SK-N-SH (cell line): ENCODE measurements at regions of chr10 and their contacts with region 1.

Region 1: GRCh38 chr10:21495752-21496342 is 29.6 kb downstream of the SKIDA1 start:
- DNase-seq: peak; percentile 99
- H3K4me3 ChIP-seq: peak overlapping the region; percentile 92
- H3K27ac ChIP-seq: peak overlapping the region; percentile 62 to 91
- H3K4me1 ChIP-seq: peaks cover 0 to 7% of the 10 kb centered on the region in 2 experiments; a peak in 2 of 4 replicates
- H3K27me3 ChIP-seq: no peaks in the 10 kb centered on the region
- CTCF ChIP-seq: peak; percentile 90
- EP300 ChIP-seq: peak; percentile 54 to 58; a peak in 3 of 4 replicates
- RAD21 ChIP-seq: peak; percentile 90

Region 2: DNA sequence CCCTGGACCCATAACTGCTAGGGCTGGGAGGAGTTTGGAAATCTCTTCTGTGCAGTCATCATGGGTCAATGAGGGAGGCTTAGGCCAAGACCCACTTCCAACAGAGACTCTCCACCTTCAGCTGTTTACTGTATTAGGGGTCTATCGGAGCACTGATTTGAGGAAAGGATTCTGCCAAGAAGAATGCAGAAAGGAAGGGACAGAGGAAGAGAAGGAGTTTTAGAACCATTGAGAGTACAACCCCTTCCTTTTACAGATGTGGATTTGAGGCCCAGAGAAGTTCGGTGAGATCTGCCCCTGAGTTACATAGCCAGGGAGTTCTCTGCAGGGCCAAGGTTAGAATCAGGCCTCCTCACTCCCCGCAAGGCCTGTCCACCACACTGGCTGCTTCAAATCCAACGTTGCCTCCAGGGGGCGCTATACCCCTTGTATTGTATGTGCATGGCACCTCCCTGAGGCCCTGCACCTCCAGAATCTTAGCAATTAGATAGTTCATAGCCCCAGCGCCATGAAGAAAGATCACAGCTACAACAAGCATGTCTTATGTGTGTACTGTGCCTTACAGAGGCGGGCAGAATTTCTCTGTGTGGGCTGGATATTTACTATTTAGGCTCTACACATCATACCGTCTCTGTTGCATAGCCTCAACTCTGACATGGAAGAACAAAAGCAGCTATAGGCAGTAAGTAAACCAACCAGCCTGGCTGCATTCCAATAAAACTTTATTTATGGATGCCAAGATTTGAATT is 217.2 kb before region 1 on chr10:
- CTCF ChIA-PET with region 1: interaction called, 18 read pairs
- POLR2A ChIA-PET with region 1: no interaction called
- DNase-seq: peak; percentile 63
- H3K4me3 ChIP-seq: no peak overlapping the region; a peak in 1 of 4 replicates
- H3K27ac ChIP-seq: no peak overlapping the region
- H3K4me1 ChIP-seq: peaks cover 0 to 5% of the 10 kb centered on the region in 2 experiments; a peak in 1 of 4 replicates
- H3K27me3 ChIP-seq: no peaks in the 10 kb centered on the region
- CTCF ChIP-seq: peak; percentile 90
- EP300 ChIP-seq: no peak
- RAD21 ChIP-seq: peak; percentile 91

Region 3: GRCh38 chr10:21479570-21480315 is 16.1 kb before region 1 on chr10:
- CTCF ChIA-PET with region 1: no interaction called
- POLR2A ChIA-PET with region 1: no interaction called
- DNase-seq: no peak
- H3K4me3 ChIP-seq: no peak overlapping the region
- H3K27ac ChIP-seq: no peak overlapping the region
- H3K4me1 ChIP-seq: no peaks in the 10 kb centered on the region
- H3K27me3 ChIP-seq: no peaks in the 10 kb centered on the region
- CTCF ChIP-seq: no peak
- EP300 ChIP-seq: no peak
- RAD21 ChIP-seq: no peak

Region 4: GRCh38 chr10:21525367-21526183 is 29.7 kb after region 1 on chr10 and contains the start of gene SKIDA1:
- CTCF ChIA-PET with region 1: interaction called, 101 read pairs
- POLR2A ChIA-PET with region 1: interaction called, 26 read pairs
- DNase-seq: peak; percentile 86
- H3K4me3 ChIP-seq: peak within 1 kb of the TSS; percentile 70 to 76
- H3K27ac ChIP-seq: peak within 1 kb of the TSS; percentile 98 to 99
- H3K4me1 ChIP-seq: peaks cover 28 to 38% of the 10 kb centered on the region in 2 experiments; a peak in 3 of 4 replicates
- H3K27me3 ChIP-seq: no peaks in the 10 kb centered on the region
- CTCF ChIP-seq: no peak
- EP300 ChIP-seq: peak in 1 of 2 experiments; percentile 30; a peak in 1 of 4 replicates
- RAD21 ChIP-seq: no peak
- polyA plus RNA-seq, gene SKIDA1: 0.38 and 0.47 TPM in 2 replicates

Region 5: DNA sequence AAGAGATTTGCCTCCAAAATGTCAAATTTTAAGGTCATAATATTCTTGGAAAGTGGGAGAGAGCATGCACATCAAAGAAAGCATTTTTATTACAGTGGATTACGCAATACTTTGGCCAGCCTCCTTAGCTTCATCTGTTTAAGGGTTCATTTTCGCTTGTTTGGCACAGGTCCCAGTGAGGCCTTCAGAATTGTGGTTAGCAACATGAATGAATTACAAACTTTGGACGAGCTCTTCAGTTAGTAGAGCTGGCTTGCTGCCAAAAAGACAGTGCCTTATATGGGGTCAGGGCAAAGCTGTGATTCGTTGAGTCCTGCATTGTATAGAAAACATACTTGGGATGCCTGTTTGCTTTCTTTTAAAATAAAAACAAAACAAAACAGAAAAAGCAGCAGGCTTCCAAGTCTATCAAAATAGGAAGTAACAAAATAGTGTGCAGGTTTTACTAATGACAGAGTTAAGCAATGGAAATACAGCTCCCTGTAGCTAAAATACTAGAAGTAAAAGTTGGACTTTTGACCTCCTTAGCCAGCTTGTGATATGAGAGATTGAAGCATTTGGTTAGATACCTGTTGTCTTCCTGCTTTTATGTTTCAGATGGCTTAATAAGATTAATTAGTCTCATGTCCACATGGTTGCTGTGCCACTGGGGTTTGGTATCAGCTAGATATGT is 229.0 kb after region 1 on chr10:
- CTCF ChIA-PET with region 1: interaction called, 73 read pairs
- POLR2A ChIA-PET with region 1: interaction called, 3 read pairs
- DNase-seq: peak; percentile 61
- H3K4me3 ChIP-seq: no peak overlapping the region
- H3K27ac ChIP-seq: peak overlapping the region; percentile 62 to 87
- H3K4me1 ChIP-seq: peaks cover 39 to 44% of the 10 kb centered on the region in 2 experiments
- H3K27me3 ChIP-seq: no peaks in the 10 kb centered on the region
- CTCF ChIP-seq: no peak
- EP300 ChIP-seq: peak; percentile 31 to 68; a peak in 2 of 4 replicates
- RAD21 ChIP-seq: no peak

Region 6: DNA sequence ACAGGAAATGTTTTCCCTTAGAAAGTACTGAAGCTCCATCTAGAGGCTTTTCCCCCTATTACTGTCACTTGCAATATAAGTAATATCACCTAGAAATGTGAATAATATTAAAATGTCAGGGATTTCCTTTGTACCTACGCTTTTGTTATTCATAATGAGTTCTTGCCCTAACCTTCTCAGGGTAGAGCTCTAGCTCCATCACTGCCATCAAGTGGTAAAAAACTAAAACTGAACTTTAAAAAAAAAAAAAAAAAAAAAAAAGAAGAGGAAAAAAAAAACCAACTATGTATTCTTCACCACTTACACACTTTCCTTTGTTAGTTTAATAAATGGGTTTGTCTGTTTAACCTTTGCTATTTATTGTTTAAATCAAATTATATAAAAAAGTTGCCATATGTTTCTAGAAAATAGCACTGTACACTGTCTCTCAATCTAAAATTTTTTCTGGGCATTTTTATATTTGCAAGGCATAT is 457.8 kb after region 1 on chr10:
- CTCF ChIA-PET with region 1: interaction called, 24 read pairs
- POLR2A ChIA-PET with region 1: no interaction called
- DNase-seq: peak; percentile 54
- H3K4me3 ChIP-seq: no peak overlapping the region; a peak in 1 of 4 replicates
- H3K27ac ChIP-seq: no peak overlapping the region
- H3K4me1 ChIP-seq: peaks cover 0 to 3% of the 10 kb centered on the region in 2 experiments; a peak in 2 of 4 replicates
- H3K27me3 ChIP-seq: no peaks in the 10 kb centered on the region
- CTCF ChIP-seq: peak; percentile 65
- EP300 ChIP-seq: no peak
- RAD21 ChIP-seq: peak; percentile 75